A673 (cell line): ENCODE measurements at regions of chr6 and their contacts with region 1.

Region 1: GRCh38 chr6:37141281-37142049 is 28.5 kb upstream of the PIM1 start:
- DNase-seq: peak; percentile 33
- H3K4me3 ChIP-seq: no peak overlapping the region
- H3K27ac ChIP-seq: peak overlapping the region; percentile 63
- H3K4me1 ChIP-seq: peaks cover 39% of the 10 kb centered on the region
- H3K27me3 ChIP-seq: no peaks in the 10 kb centered on the region
- CTCF ChIP-seq: no peak

Region 2: DNA sequence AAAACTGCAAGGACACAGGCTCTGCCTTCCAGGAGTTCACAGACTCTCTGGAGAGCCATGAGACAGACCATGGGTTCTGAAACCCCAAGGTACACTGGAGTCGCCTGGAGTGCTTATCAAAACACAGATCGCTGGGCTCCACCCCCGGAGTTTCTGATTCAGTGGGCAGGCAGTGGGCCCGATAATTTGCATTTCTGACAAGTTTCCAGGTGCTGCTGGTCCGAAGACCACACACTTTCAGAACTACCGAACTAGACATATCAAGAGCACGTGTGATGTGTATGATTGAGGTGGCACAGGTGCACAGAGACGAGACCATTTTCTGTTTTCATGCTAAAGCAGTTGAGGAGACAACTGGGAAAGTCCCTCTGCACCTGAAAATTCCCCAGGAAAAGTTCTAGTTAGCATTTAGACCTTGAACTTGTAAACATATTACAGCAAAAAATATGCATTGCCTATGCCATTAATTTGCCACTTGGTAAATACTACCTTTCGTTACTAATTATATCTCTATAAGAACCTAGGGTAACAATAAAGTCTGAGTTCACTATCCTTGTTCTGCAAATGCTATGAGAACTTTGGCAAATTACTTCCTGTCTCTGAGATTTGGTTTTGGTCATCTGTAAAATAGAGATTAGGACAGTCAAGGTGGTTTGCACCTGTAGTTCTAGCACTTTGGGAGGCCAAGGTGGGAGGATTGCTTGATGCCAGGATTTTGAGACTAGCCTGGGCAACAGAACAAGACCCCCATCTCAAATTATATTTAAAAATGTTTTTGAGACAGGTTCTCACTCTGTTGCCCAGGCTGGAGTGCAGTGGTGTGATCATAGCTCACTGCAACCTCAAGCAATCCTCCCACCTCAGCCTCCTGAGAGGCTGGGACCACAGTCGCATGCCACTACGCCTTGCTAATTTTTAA is 14.2 kb after region 1 on chr6:
- CTCF ChIA-PET with region 1: no interaction called
- POLR2A ChIA-PET with region 1: interaction called, 21 read pairs
- intact Hi-C with region 1: no loop called
- DNase-seq: no peak
- H3K4me3 ChIP-seq: no peak overlapping the region
- H3K27ac ChIP-seq: no peak overlapping the region
- H3K4me1 ChIP-seq: peaks cover 5% of the 10 kb centered on the region
- H3K27me3 ChIP-seq: no peaks in the 10 kb centered on the region
- CTCF ChIP-seq: no peak

Region 3: DNA sequence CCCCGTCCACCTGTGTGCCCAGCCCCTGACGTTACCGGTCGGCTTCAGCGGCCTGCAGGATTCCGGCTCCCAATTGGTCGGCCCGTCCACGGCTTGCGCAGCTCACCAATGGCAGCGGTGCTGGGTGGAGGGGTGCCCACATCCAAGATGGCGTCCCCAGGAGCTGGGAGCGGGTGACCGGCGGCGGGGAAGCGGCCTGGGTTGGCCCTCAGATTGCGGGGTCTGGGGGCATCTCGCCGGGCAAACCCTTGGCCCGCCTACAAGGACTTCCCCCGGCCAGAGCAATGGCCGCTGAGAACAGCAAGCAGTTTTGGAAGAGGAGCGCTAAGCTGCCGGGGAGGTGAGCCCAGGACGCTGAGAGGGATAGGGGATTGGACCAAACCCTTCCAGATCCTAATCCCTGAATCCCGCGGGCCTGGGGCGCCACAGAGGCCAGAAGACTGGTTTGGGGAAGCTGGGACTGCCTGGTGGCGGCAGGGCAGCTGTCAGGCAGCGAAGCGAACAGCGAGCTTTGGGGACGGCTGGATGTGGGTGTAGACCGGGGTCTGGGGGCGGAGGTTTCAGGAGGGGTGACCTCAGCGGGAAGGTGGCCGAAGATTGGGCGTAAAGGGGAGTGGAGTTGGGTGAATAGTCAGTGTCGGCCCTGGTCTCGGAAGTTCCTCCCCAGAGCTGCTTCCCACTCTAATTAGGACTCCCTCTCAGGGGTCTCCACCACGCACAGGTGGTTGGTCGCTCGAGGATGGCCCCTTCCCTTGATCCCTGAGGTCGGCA is 116.4 kb after region 1 on chr6 and contains the starts of genes TBC1D22B and TMEM217:
- CTCF ChIA-PET with region 1: no interaction called
- POLR2A ChIA-PET with region 1: no interaction called
- intact Hi-C with region 1: no loop called
- DNase-seq: peak; percentile 96
- H3K4me3 ChIP-seq: peak within 1 kb of the TSS; percentile 93
- H3K27ac ChIP-seq: peak within 1 kb of the TSS; percentile 83
- H3K4me1 ChIP-seq: peaks cover 16% of the 10 kb centered on the region
- H3K27me3 ChIP-seq: no peaks in the 10 kb centered on the region
- CTCF ChIP-seq: no peak
- total RNA-seq, gene TBC1D22B: 13.1 and 13.5 TPM in 2 replicates
- total RNA-seq, gene TMEM217: 0.37 TPM in 1 of 2 replicates, not detected in the other